Activated CD4-positive, alpha-beta T cell treated with anti-CD3 and anti-CD28 coated beads, Interleukin-2, amount 10 ng/mL, durations not matched to agents 7 days and 5 days (primary cell): ENCODE measurements at regions of chr6 and their contacts with region 1.

Region 1: DNA sequence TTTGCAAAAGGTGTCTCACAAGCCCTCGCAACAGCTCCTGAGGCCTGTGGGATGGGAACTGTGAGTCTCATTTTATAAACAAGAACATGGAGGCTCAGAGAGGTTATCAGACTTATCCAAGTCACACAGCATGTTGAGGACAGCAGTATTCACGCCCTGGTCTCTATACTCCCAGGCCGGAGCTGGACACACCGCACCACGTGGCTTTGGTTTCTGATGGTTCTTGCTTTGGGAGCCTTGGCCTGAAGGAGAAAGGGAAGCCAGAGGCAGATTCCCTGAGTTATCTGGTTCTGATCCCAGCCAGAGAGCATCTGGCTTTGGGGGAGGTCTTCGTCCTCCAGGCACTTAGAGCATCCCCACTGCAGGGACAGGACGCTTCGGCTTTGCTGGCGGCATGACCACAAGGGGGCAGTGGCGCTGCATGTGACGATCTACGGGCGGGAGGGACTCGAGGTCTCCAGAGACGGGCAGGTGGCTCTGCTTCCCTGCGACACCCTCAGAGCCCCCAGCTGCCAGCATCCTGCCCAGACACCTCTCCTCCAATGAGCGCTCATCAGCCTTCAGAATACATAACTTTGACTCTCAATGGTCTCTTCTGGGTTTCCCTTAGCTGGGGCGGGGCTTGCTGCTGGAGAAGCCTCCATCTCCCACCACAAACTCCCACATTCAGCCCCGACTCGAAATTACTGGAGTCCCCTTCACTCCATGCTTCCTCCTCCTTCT is 51.4 kb upstream of the SAYSD1 start:
- DNase-seq: peak; percentile 85
- H3K4me3 Mint-ChIP-seq: no peak overlapping the region
- H3K27ac Mint-ChIP-seq: no peak overlapping the region
- H3K4me1 Mint-ChIP-seq: peaks cover 5% of the 10 kb centered on the region
- H3K27me3 Mint-ChIP-seq: no peaks in the 10 kb centered on the region

Region 2: GRCh38 chr6:39088331-39088730 is 78.0 kb before region 1 on chr6:
- CTCF ChIA-PET with region 1: no interaction called
- POLR2A ChIA-PET with region 1: no interaction called
- DNase-seq: no peak
- H3K4me3 Mint-ChIP-seq: no peak overlapping the region
- H3K27ac Mint-ChIP-seq: no peak overlapping the region
- H3K4me1 Mint-ChIP-seq: peaks cover 7% of the 10 kb centered on the region
- H3K27me3 Mint-ChIP-seq: peaks cover 41% of the 10 kb centered on the region

Region 3: GRCh38 chr6:39114704-39115599 is 51.4 kb before region 1 on chr6 and contains the start of gene SAYSD1:
- CTCF ChIA-PET with region 1: no interaction called
- POLR2A ChIA-PET with region 1: no interaction called
- DNase-seq: peak; percentile 93
- H3K4me3 Mint-ChIP-seq: peak within 1 kb of the TSS; percentile 96
- H3K27ac Mint-ChIP-seq: peak within 1 kb of the TSS; percentile 98
- H3K4me1 Mint-ChIP-seq: peaks cover 61% of the 10 kb centered on the region
- H3K27me3 Mint-ChIP-seq: no peaks in the 10 kb centered on the region
- total RNA-seq, gene SAYSD1: 14.3 to 15.1 TPM

Region 4: DNA sequence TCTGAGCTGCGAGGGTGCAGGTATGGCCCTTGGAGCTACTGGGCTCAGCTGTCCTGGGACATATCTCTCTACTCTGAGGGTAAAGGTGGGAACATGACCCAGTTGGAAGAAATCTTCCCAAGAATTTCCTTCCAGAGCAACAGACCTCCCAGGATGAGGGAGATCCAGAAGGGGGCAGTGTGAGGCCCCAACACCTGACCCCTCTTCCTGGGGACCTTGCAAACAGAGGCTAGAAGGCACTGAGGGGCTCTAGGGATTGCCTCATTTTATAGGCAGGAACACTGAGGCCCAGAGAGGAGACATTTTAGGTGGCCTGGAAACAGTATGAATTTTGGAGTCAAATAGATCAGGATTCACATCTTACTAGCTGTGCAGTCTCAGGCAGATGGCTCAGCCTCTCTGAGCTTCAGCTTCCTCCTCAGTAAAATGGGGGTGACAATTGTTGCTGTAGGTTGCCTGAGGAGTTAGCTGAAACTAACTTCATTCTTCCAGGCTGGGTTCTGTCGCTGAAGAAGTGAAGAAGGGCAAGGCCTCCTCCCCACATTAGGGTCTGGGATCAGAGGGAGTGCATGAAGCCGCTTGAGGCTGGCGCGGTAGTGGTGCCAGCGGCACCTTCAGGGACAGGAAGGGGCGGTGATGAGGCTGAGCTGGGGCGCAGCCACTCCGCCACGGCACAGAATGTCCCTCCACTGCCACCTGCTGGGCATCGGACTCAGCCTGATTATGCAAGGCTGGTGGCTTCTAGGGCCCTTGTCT is 136.5 kb after region 1 on chr6:
- CTCF ChIA-PET with region 1: interaction called, 91 read pairs
- POLR2A ChIA-PET with region 1: no interaction called
- DNase-seq: peak; percentile 91
- H3K4me3 Mint-ChIP-seq: peak overlapping the region; percentile 9
- H3K27ac Mint-ChIP-seq: no peak overlapping the region
- H3K4me1 Mint-ChIP-seq: peaks cover 8% of the 10 kb centered on the region
- H3K27me3 Mint-ChIP-seq: no peaks in the 10 kb centered on the region